ENCODE measurements at regions of chr14 and their contacts with region 1.

Region 1: GRCh38 chr14:89033756-89034155 is 209.3 kb downstream of the TTC8 start:
- DNase-seq: no peak
- ATAC-seq: no peak

Region 2: GRCh38 chr14:89165189-89166181 is 131.7 kb after region 1 on chr14:
- intact Hi-C with region 1: loop called (anchors 10 kb)
- DNase-seq: no peak
- ATAC-seq: peak; percentile 38

Region 3: GRCh38 chr14:89445273-89445973 is 411.7 kb after region 1 on chr14:
- intact Hi-C with region 1: no loop called
- DNase-seq: no peak
- ATAC-seq: no peak

Region 4: GRCh38 chr14:89613260-89614008 is 579.7 kb after region 1 on chr14:
- intact Hi-C with region 1: loop called (anchors 5 kb)
- DNase-seq: no peak
- ATAC-seq: no peak